OCI-LY7 (cell line): ENCODE measurements at regions of chr3 and their contacts with region 1.

Region 1: DNA sequence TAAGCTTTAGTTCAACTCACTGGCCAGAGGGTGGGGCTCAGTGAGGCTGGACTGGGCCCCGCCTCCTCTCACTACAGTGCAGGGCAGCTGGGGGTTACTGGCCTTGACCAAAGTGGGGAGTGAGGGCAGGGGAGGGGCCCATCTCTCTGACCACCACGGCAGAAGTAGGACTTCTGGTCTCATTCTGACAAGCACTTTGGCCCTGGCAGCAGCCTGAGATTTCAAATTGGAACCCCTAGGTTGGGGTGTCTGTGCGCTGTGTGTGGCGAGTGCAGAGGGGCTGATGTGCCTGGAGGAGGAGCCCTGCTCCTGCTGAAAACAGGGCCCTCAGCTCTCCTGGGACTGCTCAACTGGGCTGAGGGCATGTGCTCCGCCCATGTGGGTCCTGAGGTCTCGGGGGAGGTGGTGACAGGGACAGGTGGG is 60.3 kb upstream of the RPL32 start:
- DNase-seq: peak; percentile 60
- H3K4me3 ChIP-seq: no peak overlapping the region
- H3K27ac ChIP-seq: no peak overlapping the region
- H3K4me1 ChIP-seq: peaks cover 12% of the 10 kb centered on the region
- CTCF ChIP-seq: peak; percentile 56

Region 2: GRCh38 chr3:12841149-12841970 is 60.3 kb before region 1 on chr3 and contains the start of gene RPL32:
- CTCF ChIA-PET with region 1: no interaction called
- POLR2A ChIA-PET with region 1: no interaction called
- intact Hi-C with region 1: no loop called
- DNase-seq: peak; percentile 98
- H3K4me3 ChIP-seq: peak within 1 kb of the TSS; percentile 100
- H3K27ac ChIP-seq: peak within 1 kb of the TSS; percentile 67
- H3K4me1 ChIP-seq: peaks cover 43% of the 10 kb centered on the region
- CTCF ChIP-seq: peak; percentile 93
- total RNA-seq, gene RPL32: 3,339 and 3,717 TPM in 2 replicates

Region 3: GRCh38 chr3:12954891-12955650 is 53.4 kb after region 1 on chr3:
- CTCF ChIA-PET with region 1: no interaction called
- POLR2A ChIA-PET with region 1: no interaction called
- intact Hi-C with region 1: loop called (anchors 2 kb)
- DNase-seq: peak; percentile 52
- H3K4me3 ChIP-seq: no peak overlapping the region
- H3K27ac ChIP-seq: no peak overlapping the region
- H3K4me1 ChIP-seq: peaks cover 26% of the 10 kb centered on the region
- CTCF ChIP-seq: no peak

Region 4: DNA sequence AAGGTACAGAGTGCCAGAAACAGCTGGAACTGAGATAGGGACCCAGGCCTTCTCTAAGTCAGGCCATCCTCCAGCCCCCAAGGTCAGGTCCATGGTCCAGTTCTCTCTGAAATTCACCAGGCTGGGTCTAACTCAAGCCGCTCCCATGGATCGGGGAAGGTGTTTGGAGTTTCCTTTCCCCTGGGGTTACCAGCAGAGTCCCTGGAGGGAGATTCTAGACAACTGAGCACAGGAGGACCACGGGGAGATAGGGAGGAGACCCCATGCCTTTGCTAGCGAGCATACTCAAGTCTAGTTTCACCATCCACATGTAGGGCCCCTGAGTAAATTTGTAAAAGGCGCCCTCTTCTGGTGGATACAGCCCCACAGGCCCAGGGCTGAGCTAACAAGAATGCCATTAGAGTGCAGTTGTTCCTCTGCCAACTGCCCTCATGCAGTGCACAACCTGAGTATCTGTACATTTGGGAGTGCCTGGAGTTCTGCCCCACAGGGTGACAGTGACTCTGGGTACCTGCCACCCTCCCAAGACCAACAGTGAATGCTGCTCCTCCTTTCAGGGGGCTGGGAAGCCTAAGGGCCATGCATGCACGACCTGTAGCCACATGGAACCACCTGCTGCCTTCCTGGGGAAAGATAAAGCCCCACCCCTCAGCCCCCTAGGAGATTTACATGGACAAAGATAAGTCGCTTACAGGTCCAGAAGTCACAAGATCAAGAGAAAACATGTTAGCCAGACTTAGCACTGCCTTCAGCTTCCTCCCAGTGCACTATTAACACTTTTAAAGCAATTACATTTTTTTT is 82.6 kb after region 1 on chr3:
- CTCF ChIA-PET with region 1: no interaction called
- POLR2A ChIA-PET with region 1: no interaction called
- intact Hi-C with region 1: loop called (anchors 5 kb)
- DNase-seq: peak; percentile 77
- H3K4me3 ChIP-seq: no peak overlapping the region
- H3K27ac ChIP-seq: peak overlapping the region; percentile 14
- H3K4me1 ChIP-seq: peaks cover 51% of the 10 kb centered on the region
- CTCF ChIP-seq: peak; percentile 93

Region 5: GRCh38 chr3:13440204-13440817 is 538.7 kb after region 1 on chr3:
- CTCF ChIA-PET with region 1: no interaction called
- POLR2A ChIA-PET with region 1: no interaction called
- intact Hi-C with region 1: no loop called
- DNase-seq: no peak
- H3K4me3 ChIP-seq: no peak overlapping the region
- H3K27ac ChIP-seq: no peak overlapping the region
- H3K4me1 ChIP-seq: no peaks in the 10 kb centered on the region
- CTCF ChIP-seq: no peak